ENCODE measurements at regions of chr16 and their contacts with region 1.

Region 1: GRCh38 chr16:82229796-82230619 is 60.0 kb upstream of the MPHOSPH6 start:
- DNase-seq: peak; percentile 71

Region 2: DNA sequence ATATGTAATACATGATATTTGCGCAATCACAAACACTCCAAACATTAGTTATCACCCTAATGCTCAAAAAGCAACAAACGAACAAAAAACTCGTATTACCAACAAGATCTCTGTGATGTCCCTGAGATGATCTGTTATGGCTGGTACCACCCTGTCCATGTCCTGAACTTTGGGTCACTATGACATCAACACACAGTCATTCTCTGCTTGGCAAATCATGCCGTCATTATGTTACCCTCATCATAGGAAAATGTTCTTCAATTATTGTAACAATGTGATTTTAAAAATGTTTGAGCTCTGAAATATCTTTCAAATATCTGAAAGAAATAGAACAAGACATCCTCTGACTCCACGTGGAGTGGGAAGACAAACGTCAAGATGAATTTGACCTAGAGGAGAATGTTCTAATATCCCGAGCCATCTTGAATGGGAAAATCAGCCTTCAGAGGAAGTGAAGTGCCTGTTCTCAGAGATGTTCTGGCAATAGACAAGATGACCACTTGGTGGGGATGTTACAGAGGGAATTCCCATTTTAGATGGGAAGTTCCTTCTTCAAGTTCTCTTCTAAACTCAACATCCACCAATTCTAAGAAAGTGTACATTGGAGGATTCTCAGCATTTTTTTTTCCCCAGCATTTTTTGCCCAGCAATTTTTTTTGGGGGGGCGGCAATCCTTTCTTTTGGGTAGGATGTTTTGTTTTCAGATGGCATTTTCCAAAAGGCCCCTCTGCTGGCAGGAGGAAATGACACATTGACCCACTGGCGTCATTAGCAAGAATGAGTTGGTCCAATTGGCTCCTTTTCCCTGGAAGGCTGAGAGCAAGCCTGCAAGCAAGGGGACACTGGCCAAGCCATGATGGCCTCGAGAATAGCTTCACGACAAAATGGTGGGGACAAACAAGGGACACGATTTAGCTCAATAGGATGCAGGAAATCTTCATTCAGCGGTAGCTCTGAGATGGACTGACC is 198.6 kb before region 1 on chr16:
- CTCF ChIA-PET with region 1: interaction called, 19 read pairs
- POLR2A ChIA-PET with region 1: interaction called, 3 read pairs
- DNase-seq: peak; percentile 46

Region 3: DNA sequence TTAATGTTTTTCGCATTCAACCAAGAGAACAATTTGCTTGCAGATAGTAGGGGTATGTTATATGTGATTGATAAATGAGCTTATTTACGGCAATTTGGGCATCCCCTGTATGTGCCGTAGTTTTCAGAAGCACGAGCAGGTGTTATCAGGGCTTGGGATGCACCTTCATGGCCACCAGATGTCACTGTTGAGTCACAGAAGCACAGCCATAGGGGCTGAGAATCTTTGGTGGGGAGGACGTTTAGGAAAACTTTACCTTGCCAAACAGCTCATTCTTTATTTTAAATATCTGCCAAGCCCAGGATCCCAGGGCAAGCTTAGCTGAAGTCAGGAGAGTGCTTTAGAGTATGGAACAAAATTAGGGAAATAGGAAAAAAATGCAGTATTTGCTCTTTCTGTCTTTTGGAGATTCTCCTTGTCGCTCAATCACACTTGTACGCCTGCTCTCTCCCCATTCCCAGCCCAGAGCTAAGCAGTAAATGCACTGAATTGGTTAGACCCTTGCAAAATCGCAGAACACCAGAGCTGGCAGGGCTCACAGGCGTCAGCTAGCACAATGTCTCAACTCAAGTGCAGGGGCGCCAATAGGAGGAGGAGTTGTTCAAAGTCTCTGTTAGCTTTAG is 33.6 kb after region 1 on chr16:
- CTCF ChIA-PET with region 1: no interaction called
- POLR2A ChIA-PET with region 1: no interaction called
- DNase-seq: peak; percentile 67

Region 4: DNA sequence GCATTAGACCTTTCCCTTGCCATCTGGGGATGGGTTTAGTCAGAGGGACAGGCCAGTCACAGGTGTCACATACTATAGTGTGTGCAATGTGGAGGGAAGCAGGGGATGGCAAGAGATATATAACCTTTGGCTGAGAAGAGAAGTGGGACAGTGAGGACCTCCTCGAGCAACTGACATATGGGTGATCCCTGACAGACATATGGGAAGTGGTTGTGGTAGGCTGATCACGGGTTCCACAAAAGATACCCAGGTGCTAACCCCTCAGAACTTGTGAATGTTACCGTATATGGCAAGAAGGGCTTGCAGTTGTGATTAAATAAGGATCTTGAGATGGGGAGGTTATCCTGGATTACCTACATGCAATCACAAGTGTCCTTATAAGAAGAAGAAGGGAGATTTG is 128.2 kb after region 1 on chr16:
- CTCF ChIA-PET with region 1: no interaction called
- POLR2A ChIA-PET with region 1: no interaction called
- DNase-seq: no peak

Measured in HEK293T (cell line).